Gastrocnemius medialis (tissue), 4 donors: ENCODE measurements at regions of chr22 and their contacts with region 1.

Region 1: DNA sequence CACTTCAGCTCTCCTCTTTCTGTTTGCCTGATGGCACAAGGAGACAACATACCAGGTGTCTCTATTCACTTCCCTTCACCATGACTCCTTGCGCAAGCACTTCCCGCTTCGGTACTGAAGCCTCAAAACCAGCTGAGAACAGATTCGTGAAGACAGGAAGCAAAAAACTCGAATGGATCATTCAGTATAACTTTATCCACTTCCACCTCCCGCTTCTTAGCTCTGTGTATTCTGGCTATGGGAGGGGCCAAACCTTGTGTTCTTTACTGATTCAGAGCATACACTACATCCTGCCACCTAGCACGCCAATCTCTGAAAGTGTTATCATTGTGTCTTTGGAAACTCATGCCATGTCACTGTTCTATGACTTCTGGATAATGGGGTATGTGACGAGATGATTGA is 62.2 kb upstream of the ADA2 start:
- DNase-seq: no peak
- ATAC-seq: no peak
- H3K4me3 ChIP-seq: no peak overlapping the region
- H3K27ac ChIP-seq: no peak overlapping the region
- H3K4me1 ChIP-seq: no peaks in the 10 kb centered on the region
- H3K27me3 ChIP-seq: no peaks in the 10 kb centered on the region
- CTCF ChIP-seq: no peak
- POLR2A ChIP-seq: no peak

Region 2: GRCh38 chr22:17339095-17339693 is 57.8 kb after region 1 on chr22:
- in situ Hi-C with region 1: loop called in 1 of 4 experiments (anchors 10 kb)
- intact Hi-C with region 1: no loop called
- DNase-seq: peak; percentile 13 to 65
- ATAC-seq: peak; percentile 98 to 99
- H3K4me3 ChIP-seq: peak overlapping the region in 2 of 4 donors; percentile 7 to 36
- H3K27ac ChIP-seq: peak overlapping the region; percentile 73 to 84 (median 76)
- H3K4me1 ChIP-seq: peaks cover 9 to 14% of the 10 kb centered on the region in 2 donors
- H3K27me3 ChIP-seq: no peaks in the 10 kb centered on the region
- CTCF ChIP-seq: no peak
- POLR2A ChIP-seq: no peak